ENCODE measurements at regions of chr7 and their contacts with region 1.

Region 1: DNA sequence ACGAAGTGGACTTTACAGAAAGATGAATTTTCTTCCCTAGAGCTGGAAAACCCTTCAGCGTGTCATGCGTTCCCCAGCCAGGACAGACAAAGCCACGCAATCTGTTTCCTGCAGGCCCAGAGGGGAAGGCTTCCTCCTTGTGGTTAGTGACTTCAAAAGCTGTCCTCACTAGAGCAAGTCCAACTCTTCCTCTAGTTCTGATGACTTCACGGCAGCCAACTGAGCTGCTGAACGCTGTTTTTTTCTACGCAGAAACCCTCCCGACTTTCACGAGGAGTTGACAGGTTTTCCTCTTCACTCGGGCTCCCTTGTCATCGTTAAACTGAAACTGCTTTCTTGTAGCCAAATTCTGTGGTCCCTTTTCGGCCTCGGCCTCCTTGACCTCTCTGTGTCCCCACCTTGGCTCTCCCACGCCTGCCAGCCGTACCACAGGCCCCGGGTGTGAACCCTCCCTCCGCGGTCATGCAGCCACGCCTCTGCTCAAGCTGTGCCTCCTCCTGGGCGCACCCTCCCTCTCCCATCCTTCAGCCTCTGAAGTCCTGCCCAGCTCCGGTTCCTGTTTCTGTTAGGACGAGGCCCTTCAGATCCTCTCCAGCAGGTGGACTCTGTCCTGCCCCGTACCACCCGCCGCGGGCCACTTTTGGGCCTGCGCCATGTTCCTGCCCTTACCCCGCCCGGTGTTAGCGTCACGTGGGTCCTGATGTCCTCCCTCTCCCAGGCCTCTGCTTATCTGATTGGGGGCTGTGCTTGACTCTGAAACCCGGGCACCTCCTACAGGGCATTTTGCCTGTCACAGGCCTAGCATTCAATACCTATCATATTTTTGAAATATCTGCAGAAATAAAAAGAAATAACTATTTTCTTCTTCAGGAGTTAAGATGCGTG is 39.3 kb downstream of the CUX1 start:
- DNase-seq: peak; percentile 91 to 98
- H3K4me3 ChIP-seq: peak overlapping the region; percentile 46
- H3K27ac ChIP-seq: peak overlapping the region; percentile 76
- H3K4me1 ChIP-seq: peaks cover 18% of the 10 kb centered on the region
- H3K27me3 ChIP-seq: no peaks in the 10 kb centered on the region
- CTCF ChIP-seq: peak; percentile 73

Region 2: DNA sequence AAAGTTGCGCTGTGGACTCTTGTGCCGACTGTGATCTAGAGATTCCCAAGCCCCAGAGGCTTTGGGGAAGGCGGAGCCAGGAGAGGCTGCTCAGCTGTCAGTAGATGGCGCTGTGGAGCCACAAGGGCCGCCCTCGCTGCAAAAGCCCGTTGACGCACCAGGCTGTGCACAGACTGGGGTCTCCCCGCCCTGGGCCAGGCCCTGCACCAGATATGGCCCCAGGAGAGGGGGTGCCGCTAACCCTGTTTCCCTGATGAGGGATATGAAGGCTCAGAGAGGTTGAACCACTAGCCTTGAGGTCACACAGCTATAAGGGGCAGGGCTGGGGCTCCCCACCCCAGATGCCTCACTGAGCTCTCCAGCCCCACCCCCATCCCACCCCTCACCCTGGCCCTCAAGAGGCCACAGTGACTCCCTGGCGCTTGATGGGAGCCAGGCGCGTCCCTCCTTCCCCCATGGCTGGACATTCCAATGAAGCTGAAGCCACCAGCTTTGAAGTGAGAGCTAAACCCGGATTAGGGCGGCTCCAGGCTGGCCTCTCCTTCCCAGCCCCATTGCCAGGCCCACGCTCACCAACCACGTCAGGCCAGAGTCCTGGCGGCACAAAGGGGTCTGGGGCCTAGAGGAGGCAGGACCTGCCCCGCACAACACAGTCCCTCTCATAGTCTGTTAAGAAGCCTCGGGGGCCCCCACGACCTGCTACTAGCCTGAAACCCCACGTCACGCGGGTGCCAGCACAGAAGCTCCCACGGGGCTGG is 254.1 kb before region 1 on chr7:
- CTCF ChIA-PET with region 1: no interaction called
- POLR2A ChIA-PET with region 1: no interaction called
- intact Hi-C with region 1: loop called (anchors 5 kb)
- DNase-seq: peak; percentile 47 to 83
- H3K4me3 ChIP-seq: no peak overlapping the region
- H3K27ac ChIP-seq: no peak overlapping the region
- H3K4me1 ChIP-seq: no peaks in the 10 kb centered on the region; the same call in 1 of the 2 replicates
- H3K27me3 ChIP-seq: no peaks in the 10 kb centered on the region
- CTCF ChIP-seq: peak; percentile 93

Region 3: GRCh38 chr7:101767544-101767943 is 89.2 kb before region 1 on chr7:
- CTCF ChIA-PET with region 1: no interaction called
- POLR2A ChIA-PET with region 1: interaction called, 10 read pairs
- intact Hi-C with region 1: no loop called
- DNase-seq: no peak
- H3K4me3 ChIP-seq: no peak overlapping the region
- H3K27ac ChIP-seq: no peak overlapping the region
- H3K4me1 ChIP-seq: no peaks in the 10 kb centered on the region
- H3K27me3 ChIP-seq: 0 out of 2 replicates have a peak, but pooled peaks cover 13% of the 10 kb centered on the region
- CTCF ChIP-seq: no peak

Region 4: DNA sequence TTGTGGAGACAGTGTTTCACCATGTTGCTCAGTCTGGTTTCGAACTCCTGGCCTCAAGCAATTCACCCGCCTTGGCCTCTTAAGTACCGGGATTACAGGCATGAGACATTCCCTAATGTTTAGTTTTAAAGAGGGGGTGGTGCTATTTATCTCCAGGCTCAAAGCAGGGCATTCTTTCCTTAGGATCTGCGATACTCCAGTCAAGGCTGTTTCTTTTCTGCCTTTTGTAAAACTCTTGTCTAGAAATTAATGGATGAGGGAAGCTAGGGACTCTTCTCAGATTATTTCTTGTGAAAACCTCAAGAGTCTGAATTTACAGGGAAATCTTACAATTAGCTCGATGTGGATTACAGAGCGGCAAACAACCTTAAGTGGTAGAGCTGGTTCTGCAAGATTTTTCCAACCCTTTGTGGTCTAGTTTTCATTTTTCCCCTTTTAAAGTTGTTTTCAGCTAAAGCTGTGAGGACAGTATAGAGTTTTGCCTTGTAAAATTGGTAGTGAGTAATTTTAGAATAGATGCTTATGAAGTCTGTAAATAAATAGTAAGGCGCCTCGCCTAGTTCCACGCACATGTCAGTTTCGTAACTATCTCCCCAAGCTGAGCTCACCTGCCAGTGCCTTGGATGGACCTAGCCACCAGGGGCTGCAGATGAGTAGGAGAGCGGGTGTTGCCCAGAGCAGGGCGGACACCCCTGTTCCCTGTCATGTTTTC is 13.8 kb after region 1 on chr7:
- CTCF ChIA-PET with region 1: no interaction called
- POLR2A ChIA-PET with region 1: interaction called, 13 read pairs
- intact Hi-C with region 1: no loop called
- DNase-seq: peak; percentile 76 to 91
- H3K4me3 ChIP-seq: peak overlapping the region; percentile 30; the same call in 1 of the 2 replicates
- H3K27ac ChIP-seq: peak overlapping the region; percentile 86
- H3K4me1 ChIP-seq: peaks cover 32% of the 10 kb centered on the region
- H3K27me3 ChIP-seq: no peaks in the 10 kb centered on the region
- CTCF ChIP-seq: peak; percentile 64

Region 5: GRCh38 chr7:102008535-102009345 is 152.0 kb after region 1 on chr7:
- CTCF ChIA-PET with region 1: no interaction called
- POLR2A ChIA-PET with region 1: no interaction called
- intact Hi-C with region 1: loop called (anchors 10 kb)
- DNase-seq: peak in 1 of 2 experiments; percentile 79
- H3K4me3 ChIP-seq: no peak overlapping the region
- H3K27ac ChIP-seq: no peak overlapping the region
- H3K4me1 ChIP-seq: no peaks in the 10 kb centered on the region
- H3K27me3 ChIP-seq: no peaks in the 10 kb centered on the region
- CTCF ChIP-seq: no peak

Region 6: DNA sequence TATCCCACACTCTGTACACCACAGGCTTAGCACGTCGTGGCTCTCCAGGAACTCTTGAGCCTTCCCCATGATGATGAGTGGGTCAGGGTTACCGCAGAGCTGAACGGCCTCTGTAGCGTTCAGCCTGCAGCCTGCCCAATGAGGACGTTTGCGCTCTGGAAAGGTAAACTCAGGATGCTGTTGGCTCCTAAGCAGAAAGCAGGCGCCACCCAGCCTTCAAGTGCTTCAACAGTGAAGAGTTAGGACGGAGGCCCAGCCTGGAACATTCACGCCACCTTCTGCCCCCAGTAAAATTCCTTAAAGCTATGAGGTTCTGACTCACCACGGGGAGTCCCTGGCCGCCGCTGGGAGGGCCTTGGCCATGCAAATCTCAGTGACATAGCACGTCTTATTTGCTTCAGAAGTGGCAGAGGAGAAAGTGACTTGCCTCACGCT is 268.4 kb after region 1 on chr7:
- CTCF ChIA-PET with region 1: no interaction called
- POLR2A ChIA-PET with region 1: no interaction called
- intact Hi-C with region 1: loop called (anchors 10 kb)
- DNase-seq: peak; percentile 68 to 90
- H3K4me3 ChIP-seq: no peak overlapping the region
- H3K27ac ChIP-seq: no peak overlapping the region
- H3K4me1 ChIP-seq: peaks cover 14% of the 10 kb centered on the region
- H3K27me3 ChIP-seq: no peaks in the 10 kb centered on the region
- CTCF ChIP-seq: no peak

Region 7: DNA sequence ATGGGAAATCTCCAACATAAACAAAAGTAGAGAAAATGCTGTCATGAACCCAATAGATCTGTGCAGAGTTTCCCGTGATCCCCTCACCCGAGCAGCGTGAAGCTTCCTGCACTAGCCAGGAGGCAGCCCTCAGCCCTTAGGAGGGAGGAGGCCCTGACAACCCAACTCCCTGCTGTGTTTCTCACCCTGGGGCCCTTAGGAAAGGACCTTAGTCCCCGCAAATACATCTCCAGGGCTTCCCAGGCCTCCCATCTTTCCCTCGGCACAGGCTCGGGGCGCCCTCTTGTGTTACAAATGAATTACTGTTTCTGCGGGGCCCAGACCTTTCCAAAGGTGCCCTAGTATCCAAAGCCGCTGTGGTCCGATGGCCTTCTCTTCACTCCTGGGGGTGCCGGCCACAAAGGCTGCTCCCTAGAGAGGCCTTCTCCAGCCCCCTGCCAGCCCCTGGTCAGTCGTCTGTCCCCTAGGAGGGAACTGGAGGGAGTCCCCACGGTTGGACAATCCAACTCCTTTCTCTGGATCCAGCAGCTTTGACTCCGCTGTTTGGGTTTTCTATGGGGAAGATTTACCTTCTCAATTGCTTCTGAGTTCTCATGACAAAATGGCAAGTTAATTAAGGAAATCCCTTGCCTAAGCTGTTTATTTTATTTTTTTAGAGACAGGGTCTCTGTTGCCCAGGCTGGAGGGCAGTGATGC is 380.0 kb after region 1 on chr7:
- CTCF ChIA-PET with region 1: no interaction called
- POLR2A ChIA-PET with region 1: no interaction called
- intact Hi-C with region 1: loop called (anchors 10 kb)
- DNase-seq: peak in 1 of 2 experiments; percentile 71
- H3K4me3 ChIP-seq: no peak overlapping the region
- H3K27ac ChIP-seq: no peak overlapping the region
- H3K4me1 ChIP-seq: no peaks in the 10 kb centered on the region
- H3K27me3 ChIP-seq: no peaks in the 10 kb centered on the region
- CTCF ChIP-seq: peak; percentile 90